Mammary epithelial cell (primary cell): ENCODE measurements at regions of chr1 and their contacts with region 1.

Region 1: DNA sequence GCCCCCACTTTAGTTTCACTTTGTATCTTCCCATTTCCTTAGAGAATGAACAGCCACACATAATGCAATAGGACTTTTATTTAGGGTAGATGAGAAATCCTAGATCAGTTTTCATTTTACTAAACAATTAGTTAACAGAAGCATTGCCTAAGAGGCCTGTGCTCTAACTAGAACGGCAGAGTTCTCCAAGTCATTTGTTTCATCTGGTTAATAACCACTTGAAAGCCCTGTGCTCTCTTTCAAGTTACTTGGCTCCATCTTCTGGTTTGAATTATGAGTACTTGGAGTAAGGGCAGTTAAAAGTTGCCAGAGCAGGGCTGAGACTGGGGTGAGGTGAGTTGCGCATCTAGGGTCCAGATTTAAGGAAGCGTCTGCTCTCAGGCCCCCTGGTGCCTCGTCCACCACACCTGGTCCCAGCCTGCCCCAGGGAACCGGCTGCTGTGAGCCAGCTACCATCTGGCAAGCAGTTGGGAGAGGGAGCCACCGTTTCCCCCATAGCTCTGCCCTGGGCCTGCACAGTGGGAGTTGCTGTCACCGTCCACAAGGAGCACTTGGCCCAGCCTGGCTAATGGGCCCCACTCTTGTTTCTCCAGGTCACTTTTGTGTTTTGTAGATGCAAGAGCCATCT is 18.1 kb upstream of the SLC44A3 start:
- DNase-seq: peak; percentile 79
- H3K4me3 ChIP-seq: peak overlapping the region in 2 of 3 experiments; percentile 6 to 20
- H3K27ac ChIP-seq: peak overlapping the region; percentile 75
- H3K4me1 ChIP-seq: peaks cover 47% of the 10 kb centered on the region
- H3K27me3 ChIP-seq: no peaks in the 10 kb centered on the region
- CTCF ChIP-seq: peak; percentile 61 to 68

Region 2: GRCh38 chr1:94335950-94336349 is 466.1 kb before region 1 on chr1:
- CTCF ChIA-PET with region 1: no interaction called
- dilution Hi-C with region 1: no loop called
- in situ Hi-C with region 1: no loop called
- intact Hi-C with region 1: loop called (anchors 1 kb)
- DNase-seq: peak; percentile 80
- H3K4me3 ChIP-seq: no peak overlapping the region
- H3K27ac ChIP-seq: no peak overlapping the region
- H3K4me1 ChIP-seq: peaks cover 20% of the 10 kb centered on the region
- H3K27me3 ChIP-seq: no peaks in the 10 kb centered on the region
- CTCF ChIP-seq: peak; percentile 86 to 91

Region 3: GRCh38 chr1:94514095-94514727 is 287.8 kb before region 1 on chr1:
- CTCF ChIA-PET with region 1: no interaction called
- dilution Hi-C with region 1: no loop called
- in situ Hi-C with region 1: no loop called
- intact Hi-C with region 1: loop called (anchors 2 kb)
- DNase-seq: no peak
- H3K4me3 ChIP-seq: no peak overlapping the region
- H3K27ac ChIP-seq: no peak overlapping the region
- H3K4me1 ChIP-seq: no peaks in the 10 kb centered on the region
- H3K27me3 ChIP-seq: no peaks in the 10 kb centered on the region
- CTCF ChIP-seq: peak; percentile 75 to 76

Region 4: GRCh38 chr1:94541175-94542087 is 260.6 kb before region 1 on chr1 and contains the start of gene F3:
- CTCF ChIA-PET with region 1: interaction called, 3 read pairs
- dilution Hi-C with region 1: loop called (anchors 5 kb)
- in situ Hi-C with region 1: no loop called
- intact Hi-C with region 1: loop called (anchors 1 kb)
- DNase-seq: peak; percentile 95
- H3K4me3 ChIP-seq: peak within 1 kb of the TSS; percentile 83 to 89 (median 87)
- H3K27ac ChIP-seq: peak within 1 kb of the TSS; percentile 89
- H3K4me1 ChIP-seq: peaks cover 31% of the 10 kb centered on the region
- H3K27me3 ChIP-seq: no peaks in the 10 kb centered on the region
- CTCF ChIP-seq: no peak
- total RNA-seq, gene F3: 994 to 1,649 TPM

Region 5: GRCh38 chr1:94648225-94649007 is 153.6 kb before region 1 on chr1:
- CTCF ChIA-PET with region 1: no interaction called
- dilution Hi-C with region 1: no loop called
- in situ Hi-C with region 1: no loop called
- intact Hi-C with region 1: loop called (anchors 1 kb)
- DNase-seq: peak; percentile 98
- H3K4me3 ChIP-seq: peak overlapping the region in 1 of 3 experiments; percentile 1
- H3K27ac ChIP-seq: peak overlapping the region; percentile 90
- H3K4me1 ChIP-seq: peaks cover 61% of the 10 kb centered on the region
- H3K27me3 ChIP-seq: no peaks in the 10 kb centered on the region
- CTCF ChIP-seq: no peak

Region 6: GRCh38 chr1:94863919-94864318 is 61.9 kb after region 1 on chr1:
- CTCF ChIA-PET with region 1: no interaction called
- dilution Hi-C with region 1: no loop called
- in situ Hi-C with region 1: no loop called
- intact Hi-C with region 1: no loop called
- DNase-seq: peak; percentile 84
- H3K4me3 ChIP-seq: no peak overlapping the region
- H3K27ac ChIP-seq: peak overlapping the region; percentile 91
- H3K4me1 ChIP-seq: peaks cover 37% of the 10 kb centered on the region
- H3K27me3 ChIP-seq: no peaks in the 10 kb centered on the region
- CTCF ChIP-seq: no peak

Region 7: DNA sequence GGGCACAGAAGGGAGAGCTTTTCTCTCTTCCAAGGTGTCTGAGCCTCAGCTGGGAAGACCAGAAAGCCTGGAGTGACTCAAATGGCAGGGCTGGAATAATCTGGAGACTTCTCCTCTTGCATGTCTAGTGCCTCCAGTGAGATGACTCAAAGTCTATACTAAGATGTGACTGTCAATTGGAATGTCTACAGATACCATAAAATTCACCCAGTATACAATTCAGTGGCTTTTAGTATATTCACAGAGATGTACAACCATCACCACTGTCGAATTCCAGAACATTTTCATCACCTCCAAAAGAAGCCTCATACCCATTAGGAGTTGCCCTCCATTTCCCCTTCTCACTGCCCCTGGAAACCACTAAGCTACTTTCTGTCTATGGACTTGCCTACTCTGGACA is 172.8 kb after region 1 on chr1:
- CTCF ChIA-PET with region 1: no interaction called
- dilution Hi-C with region 1: no loop called
- in situ Hi-C with region 1: no loop called
- intact Hi-C with region 1: no loop called
- DNase-seq: peak; percentile 87
- H3K4me3 ChIP-seq: no peak overlapping the region
- H3K27ac ChIP-seq: peak overlapping the region; percentile 36
- H3K4me1 ChIP-seq: peaks cover 30% of the 10 kb centered on the region
- H3K27me3 ChIP-seq: no peaks in the 10 kb centered on the region
- CTCF ChIP-seq: no peak

Region 8: GRCh38 chr1:95043141-95043980 is 241.3 kb after region 1 on chr1:
- CTCF ChIA-PET with region 1: interaction called, 3 read pairs
- dilution Hi-C with region 1: no loop called
- in situ Hi-C with region 1: no loop called
- intact Hi-C with region 1: loop called (anchors 1 kb)
- DNase-seq: peak; percentile 65
- H3K4me3 ChIP-seq: no peak overlapping the region
- H3K27ac ChIP-seq: no peak overlapping the region
- H3K4me1 ChIP-seq: peaks cover 21% of the 10 kb centered on the region
- H3K27me3 ChIP-seq: no peaks in the 10 kb centered on the region
- CTCF ChIP-seq: peak; percentile 99